MCF 10A (cell line): ENCODE measurements at regions of chr4 and their contacts with region 1.

Region 1: GRCh38 chr4:82268050-82268825 is 105.6 kb downstream of the HNRNPD start:
- DNase-seq: peak; percentile 76
- H3K4me3 Mint-ChIP-seq: no peak overlapping the region
- H3K27ac Mint-ChIP-seq: no peak overlapping the region
- H3K4me1 Mint-ChIP-seq: no peaks in the 10 kb centered on the region
- H3K27me3 Mint-ChIP-seq: no peaks in the 10 kb centered on the region
- CTCF ChIP-seq: peak; percentile 77

Region 2: DNA sequence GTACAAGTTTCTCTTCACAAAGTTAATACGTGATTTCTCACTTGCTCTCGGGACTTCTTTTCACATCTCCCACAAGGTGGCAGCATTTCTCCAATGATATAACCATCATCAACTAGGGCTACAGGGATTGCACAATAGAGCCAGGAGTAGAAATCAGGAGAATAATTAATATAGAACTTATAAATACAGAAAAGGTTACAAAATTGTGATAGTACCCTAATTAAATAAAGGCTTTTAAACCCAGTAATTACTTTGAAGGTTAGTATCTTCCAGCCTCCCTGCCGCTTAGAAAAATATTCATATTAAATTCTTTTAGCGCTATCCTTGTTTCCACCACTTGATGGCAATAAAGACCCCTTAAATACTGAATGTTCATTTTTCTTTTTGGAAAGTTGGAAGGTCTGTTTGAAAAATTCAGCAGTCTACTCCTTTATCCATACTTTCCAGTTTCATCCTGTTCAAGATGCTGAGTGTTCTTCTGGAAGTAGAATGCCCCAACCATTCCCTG is 862.3 kb before region 1 on chr4:
- CTCF ChIA-PET with region 1: interaction called, 29 read pairs
- POLR2A ChIA-PET with region 1: interaction called, 4 read pairs
- intact Hi-C with region 1: loop called (anchors 1 kb)
- DNase-seq: peak; percentile 92
- H3K4me3 Mint-ChIP-seq: no peak overlapping the region
- H3K27ac Mint-ChIP-seq: no peak overlapping the region
- H3K4me1 Mint-ChIP-seq: peaks cover 11% of the 10 kb centered on the region
- H3K27me3 Mint-ChIP-seq: peaks cover 11% of the 10 kb centered on the region
- CTCF ChIP-seq: peak; percentile 68

Region 3: DNA sequence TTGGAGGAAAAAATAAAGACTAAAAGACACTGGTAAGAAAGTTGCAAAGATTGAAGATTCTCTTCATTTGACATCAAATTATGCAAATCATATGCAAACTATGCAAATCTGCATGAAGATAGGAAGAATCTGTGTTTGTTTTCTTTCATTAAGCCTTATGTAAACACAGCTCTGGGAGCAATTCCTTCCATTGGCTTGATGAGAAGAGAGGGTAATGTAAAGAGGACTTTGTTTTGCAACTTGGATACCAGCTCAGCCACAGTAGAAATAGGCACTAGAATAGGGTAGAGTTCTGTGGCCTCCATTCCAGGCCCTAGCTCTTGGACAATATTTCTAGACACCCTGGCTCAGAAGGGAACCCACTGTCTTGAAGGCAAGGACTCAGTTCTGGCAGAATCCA is 408.1 kb before region 1 on chr4:
- CTCF ChIA-PET with region 1: interaction called, 10 read pairs
- POLR2A ChIA-PET with region 1: no interaction called
- intact Hi-C with region 1: no loop called
- DNase-seq: no peak
- H3K4me3 Mint-ChIP-seq: no peak overlapping the region
- H3K27ac Mint-ChIP-seq: no peak overlapping the region
- H3K4me1 Mint-ChIP-seq: no peaks in the 10 kb centered on the region
- H3K27me3 Mint-ChIP-seq: no peaks in the 10 kb centered on the region
- CTCF ChIP-seq: no peak

Region 4: GRCh38 chr4:82217986-82218715 is 50.1 kb before region 1 on chr4:
- CTCF ChIA-PET with region 1: interaction called, 10 read pairs
- POLR2A ChIA-PET with region 1: no interaction called
- intact Hi-C with region 1: no loop called
- DNase-seq: peak; percentile 25
- H3K4me3 Mint-ChIP-seq: no peak overlapping the region
- H3K27ac Mint-ChIP-seq: no peak overlapping the region
- H3K4me1 Mint-ChIP-seq: no peaks in the 10 kb centered on the region
- H3K27me3 Mint-ChIP-seq: no peaks in the 10 kb centered on the region
- CTCF ChIP-seq: peak; percentile 27

Region 5: GRCh38 chr4:82284858-82285805 is 16.9 kb after region 1 on chr4:
- CTCF ChIA-PET with region 1: interaction called, 22 read pairs
- POLR2A ChIA-PET with region 1: no interaction called
- intact Hi-C with region 1: no loop called
- DNase-seq: peak; percentile 99
- H3K4me3 Mint-ChIP-seq: peak overlapping the region; percentile 73
- H3K27ac Mint-ChIP-seq: no peak overlapping the region
- H3K4me1 Mint-ChIP-seq: peaks cover 7% of the 10 kb centered on the region
- H3K27me3 Mint-ChIP-seq: peaks cover 12% of the 10 kb centered on the region
- CTCF ChIP-seq: peak; percentile 90